Activated naive CD8-positive, alpha-beta T cell treated with anti-CD3 and anti-CD28 coated beads, Interleukin-2, amount 10 ng/mL, durations not matched to agents 7 days and 5 days (primary cell): ENCODE measurements at regions of chr2 and their contacts with region 1.

Region 1: DNA sequence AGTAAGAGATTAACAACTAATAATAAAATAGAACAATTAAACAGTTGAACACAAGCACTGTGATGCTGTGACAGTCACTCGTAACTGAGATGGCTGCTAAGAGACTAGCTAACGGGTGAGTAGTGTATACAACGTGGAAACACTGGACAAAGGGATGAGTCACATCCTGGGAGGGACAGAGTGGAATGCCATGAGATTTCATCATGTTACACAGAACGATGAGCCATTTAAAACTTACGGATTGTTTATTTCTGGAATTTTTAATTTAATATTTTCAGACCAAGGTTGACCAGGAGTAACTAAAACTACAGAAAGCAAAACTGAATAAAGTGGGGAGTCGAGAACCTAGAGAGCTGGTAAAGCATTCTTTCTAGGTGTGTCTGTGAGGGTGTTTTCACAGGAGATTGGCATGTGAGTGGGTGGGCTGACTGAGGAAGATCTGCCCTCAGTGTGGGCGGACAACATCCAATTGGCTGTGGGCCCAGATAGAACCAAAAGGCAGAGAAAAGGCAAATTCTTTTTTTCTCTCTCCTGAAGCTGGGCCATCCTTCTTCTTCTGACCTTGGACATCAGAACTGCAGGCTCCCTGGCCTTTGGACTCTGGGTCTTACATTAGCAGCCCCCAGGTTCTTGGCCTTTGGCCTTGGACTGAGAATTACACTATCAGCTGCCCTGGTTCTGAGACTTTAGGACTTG is 14.6 kb downstream of the TMSB10 start:
- DNase-seq: no peak
- ATAC-seq: peak; percentile 57
- H3K4me3 Mint-ChIP-seq: peak overlapping the region; percentile 76
- H3K27ac Mint-ChIP-seq: peak overlapping the region; percentile 81
- H3K4me1 Mint-ChIP-seq: peaks cover 39% of the 10 kb centered on the region
- H3K27me3 Mint-ChIP-seq: no peaks in the 10 kb centered on the region

Region 2: DNA sequence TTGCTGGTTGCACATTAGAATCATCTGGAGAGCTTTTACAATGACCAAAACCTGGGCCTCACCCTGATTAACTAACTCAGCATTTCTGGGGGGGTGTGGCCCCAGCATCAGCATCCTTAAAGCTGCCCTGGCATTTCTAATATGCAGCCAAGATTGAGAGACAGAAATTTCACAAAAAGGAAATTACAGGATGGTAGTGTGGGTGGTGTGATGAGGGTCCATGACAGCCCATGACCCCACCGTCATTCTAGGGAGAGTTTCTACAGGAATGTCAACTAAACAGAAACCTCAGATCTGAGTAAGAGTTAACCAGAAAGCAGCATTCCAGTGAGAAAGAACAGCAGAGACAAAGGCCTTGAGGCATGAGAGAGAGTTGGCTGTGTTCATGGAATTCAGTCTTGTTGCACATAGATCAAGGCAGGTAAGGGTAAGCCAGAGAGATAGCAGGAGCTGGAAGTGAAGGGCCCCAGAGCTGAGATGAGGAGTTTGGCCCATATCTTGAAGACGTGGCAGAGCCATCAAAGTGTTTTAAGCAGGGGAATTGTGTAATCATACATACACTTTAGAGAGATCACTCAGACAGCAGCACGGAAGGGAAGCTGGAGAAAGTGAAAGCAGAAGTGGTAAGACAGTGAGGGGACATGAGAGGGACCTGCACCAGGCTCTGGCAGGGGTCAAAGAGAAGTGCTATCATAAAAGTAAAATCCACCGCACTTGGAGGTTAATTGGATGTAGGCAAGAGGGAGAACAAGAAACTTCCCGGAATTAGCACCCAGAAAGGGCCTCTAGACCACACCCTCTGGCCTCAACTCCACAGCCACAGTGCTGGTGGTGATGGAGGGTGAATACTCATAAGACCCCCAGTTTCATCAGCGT is 31.4 kb before region 1 on chr2:
- POLR2A ChIA-PET with region 1: interaction called, 10 read pairs
- DNase-seq: peak; percentile 46
- ATAC-seq: peak; percentile 95
- H3K4me3 Mint-ChIP-seq: peak overlapping the region; percentile 89
- H3K27ac Mint-ChIP-seq: peak overlapping the region; percentile 99
- H3K4me1 Mint-ChIP-seq: peaks cover 62% of the 10 kb centered on the region
- H3K27me3 Mint-ChIP-seq: no peaks in the 10 kb centered on the region